ENCODE measurements at regions of chr2 and their contacts with region 1.

Region 1: DNA sequence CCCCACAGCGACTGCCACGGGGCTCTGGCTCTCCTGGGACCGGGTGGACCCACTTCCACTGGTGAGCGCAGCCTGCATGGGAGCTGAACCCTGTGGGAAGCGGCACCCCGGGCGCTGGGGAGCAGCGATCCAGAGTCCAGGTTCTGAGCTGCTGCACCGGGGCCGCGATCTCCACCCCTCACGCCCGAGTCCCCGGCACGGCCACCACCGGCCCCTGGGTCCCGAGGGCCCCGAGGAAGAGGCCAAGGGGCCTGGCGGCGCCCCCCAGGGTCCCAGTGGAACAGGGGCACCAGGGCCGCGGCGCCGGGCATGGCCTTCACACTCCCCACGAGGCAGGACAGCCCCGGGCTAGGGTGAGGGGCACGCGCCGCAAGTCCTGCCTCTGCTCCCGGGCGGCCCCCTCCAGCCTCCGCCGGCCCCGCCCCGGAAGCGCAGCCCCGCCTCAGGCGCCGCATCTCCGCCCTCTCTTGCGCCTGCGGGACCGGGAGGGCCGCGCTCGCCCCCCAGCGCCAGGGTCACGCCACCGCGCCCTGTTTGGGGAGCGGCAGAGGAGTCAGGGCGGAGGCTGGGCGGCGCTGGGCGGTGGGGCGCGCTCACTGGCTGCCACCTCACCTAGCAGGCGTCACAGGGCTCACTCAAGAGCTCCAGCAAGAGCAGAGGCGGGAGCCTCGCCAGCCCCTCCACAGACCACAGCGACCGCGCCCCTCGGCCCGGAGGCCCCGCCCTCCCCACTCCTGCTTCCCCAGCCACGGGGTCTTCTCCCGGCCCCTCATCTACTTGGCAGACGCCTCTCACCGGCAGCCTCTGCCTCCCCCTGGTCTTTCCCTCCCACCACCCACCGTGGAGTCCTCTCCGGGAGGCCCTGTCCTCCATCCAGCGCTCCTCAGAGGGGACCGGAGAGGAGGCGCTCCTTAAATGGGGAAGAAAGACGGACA is 26.8 kb downstream of the THAP4 start:
- DNase-seq: peak; percentile 40
- ATAC-seq: peak; percentile 100
- H3K4me3 ChIP-seq: peak overlapping the region; percentile 75
- H3K27ac ChIP-seq: peak overlapping the region; percentile 43; the same call in 1 of the 2 replicates
- H3K4me1 ChIP-seq: no peaks in the 10 kb centered on the region
- H3K27me3 ChIP-seq: no peaks in the 10 kb centered on the region
- CTCF ChIP-seq: peak; percentile 71 to 84 (median 75); a peak in 5 of 6 replicates
- EP300 ChIP-seq: no peak
- POLR2A ChIP-seq: no peak; the same call in 1 of the 2 replicates
- RAD21 ChIP-seq: peak; percentile 76

Region 2: DNA sequence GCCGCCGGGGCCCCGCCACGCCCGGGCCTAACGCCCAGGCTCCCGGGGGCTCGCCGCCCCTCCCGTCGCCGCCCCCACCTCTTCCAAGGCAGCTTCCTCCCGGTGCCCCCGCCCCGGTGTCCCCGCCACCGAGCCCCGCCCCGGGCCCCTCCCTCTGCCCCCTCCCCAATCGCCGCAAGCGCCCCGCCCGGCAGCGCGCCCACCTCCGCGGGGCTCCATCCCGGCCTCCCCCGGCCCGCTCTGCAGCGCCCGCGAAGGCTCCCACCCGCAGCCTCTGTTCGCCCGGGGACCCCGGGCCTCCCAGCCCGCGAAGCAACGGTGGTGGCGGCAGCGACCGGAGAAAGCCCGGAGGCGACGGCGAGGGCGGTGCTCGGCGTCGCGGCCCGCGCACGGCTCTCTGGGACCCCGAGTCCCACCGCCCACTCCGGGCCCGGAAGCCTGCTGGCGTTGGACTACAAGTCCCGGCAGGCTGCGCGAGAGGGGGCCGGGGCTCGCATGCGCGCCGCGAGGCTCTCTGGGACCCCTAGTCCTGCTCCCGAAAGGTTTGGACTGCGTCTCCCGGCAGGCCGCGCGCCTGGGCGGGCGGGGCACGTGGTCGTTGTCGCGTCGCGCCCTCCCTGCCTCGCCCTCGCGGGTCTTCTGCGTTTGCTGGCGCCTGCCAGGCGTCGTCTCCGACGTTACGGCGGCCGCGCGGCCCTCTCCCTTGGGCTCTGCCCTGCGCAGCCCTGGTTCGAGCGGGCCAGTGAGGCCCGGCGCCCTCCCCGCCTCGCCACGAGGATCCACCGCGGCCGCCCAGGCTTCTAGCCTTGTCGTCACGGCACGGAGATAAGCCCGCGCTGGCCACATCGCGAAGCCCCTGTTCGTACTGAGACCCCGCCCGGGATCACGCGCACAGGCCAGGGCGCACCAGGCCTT is 101.6 kb before region 1 on chr2 and contains the start of gene STK25:
- CTCF ChIA-PET with region 1: interaction called, 3 read pairs
- POLR2A ChIA-PET with region 1: no interaction called
- RAD21 ChIA-PET with region 1: no interaction called
- SMC1A ChIA-PET with region 1: interaction called, 3 read pairs
- in situ Hi-C with region 1: no loop called
- intact Hi-C with region 1: loop called (anchors 5 kb)
- DNase-seq: peak; percentile 90
- ATAC-seq: peak; percentile 97
- H3K4me3 ChIP-seq: peak within 1 kb of the TSS; percentile 98
- H3K27ac ChIP-seq: peak within 1 kb of the TSS; percentile 64
- H3K4me1 ChIP-seq: peaks cover 16% of the 10 kb centered on the region
- H3K27me3 ChIP-seq: no peaks in the 10 kb centered on the region
- CTCF ChIP-seq: no peak
- EP300 ChIP-seq: peak in 1 of 2 experiments; percentile 20; a peak in 1 of 4 replicates
- POLR2A ChIP-seq: peak; percentile 95
- RAD21 ChIP-seq: no peak
- polyA plus RNA-seq, gene STK25: 6.0 to 14.0 TPM

Region 3: DNA sequence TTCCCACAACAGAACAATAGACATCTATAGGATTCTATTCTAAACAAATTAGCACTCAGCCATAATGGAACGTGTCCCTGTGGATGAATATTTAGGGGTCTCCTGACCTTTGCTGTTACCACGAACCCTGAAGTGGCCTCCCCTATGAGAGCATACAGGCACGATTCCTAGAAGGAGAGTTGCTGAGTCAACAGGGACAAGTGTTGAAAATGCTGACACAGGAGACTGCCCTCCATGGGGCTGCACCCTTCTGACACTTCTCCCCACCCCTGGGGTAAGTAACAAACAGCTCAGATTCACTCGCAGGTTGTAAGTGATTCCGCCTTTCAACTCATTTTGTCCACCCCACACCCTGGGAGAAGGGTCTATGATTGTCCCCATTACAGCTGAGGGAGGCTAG is 87.6 kb before region 1 on chr2:
- CTCF ChIA-PET with region 1: no interaction called
- POLR2A ChIA-PET with region 1: no interaction called
- RAD21 ChIA-PET with region 1: no interaction called
- SMC1A ChIA-PET with region 1: no interaction called
- in situ Hi-C with region 1: no loop called
- intact Hi-C with region 1: no loop called
- DNase-seq: no peak
- ATAC-seq: no peak
- H3K4me3 ChIP-seq: no peak overlapping the region
- H3K27ac ChIP-seq: no peak overlapping the region
- H3K4me1 ChIP-seq: no peaks in the 10 kb centered on the region; the same call in 1 of the 2 replicates
- H3K27me3 ChIP-seq: no peaks in the 10 kb centered on the region
- CTCF ChIP-seq: no peak
- EP300 ChIP-seq: no peak
- POLR2A ChIP-seq: no peak
- RAD21 ChIP-seq: no peak

Region 4: DNA sequence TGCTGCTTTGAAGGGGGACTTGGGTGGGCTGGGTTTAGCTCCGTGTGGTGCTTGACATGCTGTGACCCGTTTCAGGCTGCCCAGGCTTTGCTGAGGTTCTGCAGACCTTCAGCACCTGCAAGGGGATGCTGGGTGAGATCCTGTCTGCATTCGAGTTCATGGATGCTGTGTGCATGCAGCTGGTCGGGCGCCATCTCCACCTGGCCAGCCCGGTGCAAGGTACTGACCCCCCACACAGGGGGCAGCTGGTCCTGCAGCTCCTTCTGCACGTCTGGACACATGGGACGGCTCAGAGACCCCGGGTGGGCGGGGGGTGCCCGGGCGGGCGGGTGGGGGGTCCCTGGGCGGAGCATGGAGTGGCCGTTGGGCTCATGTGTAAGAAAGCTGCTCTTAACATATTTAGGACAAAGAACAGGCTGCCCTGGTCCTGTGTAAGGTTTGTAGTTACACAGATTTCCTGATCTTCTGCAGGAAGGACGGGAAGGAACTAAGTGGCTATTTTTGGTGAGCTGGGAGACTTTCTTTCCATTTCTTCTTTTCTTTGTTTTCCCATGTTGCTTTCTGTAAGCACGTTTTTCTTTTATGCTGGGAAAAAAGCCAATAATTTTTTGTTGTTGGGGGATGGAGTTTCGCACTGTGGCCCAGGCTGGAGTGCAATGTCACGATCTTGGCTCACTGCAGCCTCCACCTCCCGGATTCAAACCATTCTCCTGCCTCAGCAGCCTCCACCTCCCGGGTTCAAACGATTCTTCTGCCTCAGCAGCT is 140.1 kb after region 1 on chr2:
- CTCF ChIA-PET with region 1: no interaction called
- POLR2A ChIA-PET with region 1: no interaction called
- RAD21 ChIA-PET with region 1: no interaction called
- SMC1A ChIA-PET with region 1: no interaction called
- in situ Hi-C with region 1: no loop called
- intact Hi-C with region 1: no loop called
- DNase-seq: no peak
- ATAC-seq: no peak
- H3K4me3 ChIP-seq: no peak overlapping the region
- H3K27ac ChIP-seq: no peak overlapping the region
- H3K4me1 ChIP-seq: no peaks in the 10 kb centered on the region
- H3K27me3 ChIP-seq: no peaks in the 10 kb centered on the region
- CTCF ChIP-seq: no peak
- EP300 ChIP-seq: no peak
- POLR2A ChIP-seq: no peak
- RAD21 ChIP-seq: no peak

Region 5: GRCh38 chr2:241933179-241933911 is 323.2 kb after region 1 on chr2:
- CTCF ChIA-PET with region 1: no interaction called
- POLR2A ChIA-PET with region 1: no interaction called
- RAD21 ChIA-PET with region 1: no interaction called
- SMC1A ChIA-PET with region 1: no interaction called
- in situ Hi-C with region 1: no loop called
- intact Hi-C with region 1: no loop called
- DNase-seq: no peak
- ATAC-seq: no peak; the same call in 2 of the 3 replicates
- H3K4me3 ChIP-seq: no peak overlapping the region
- H3K27ac ChIP-seq: no peak overlapping the region
- H3K4me1 ChIP-seq: no peaks in the 10 kb centered on the region
- H3K27me3 ChIP-seq: no peaks in the 10 kb centered on the region
- CTCF ChIP-seq: no peak
- EP300 ChIP-seq: no peak
- POLR2A ChIP-seq: no peak
- RAD21 ChIP-seq: no peak

Measured in GM12878 (cell line).